HEK293 (cell line): ENCODE measurements at regions of chr6 and their contacts with region 1.

Region 1: GRCh38 chr6:99393698-99394531 is at the start of gene COQ3:
- H3K4me3 ChIP-seq: peak within 1 kb of the TSS; percentile 71
- H3K27ac ChIP-seq: peak within 1 kb of the TSS; percentile 64
- H3K4me1 ChIP-seq: no peaks in the 10 kb centered on the region
- CTCF ChIP-seq: no peak

Region 2: GRCh38 chr6:99344289-99344688 is 49.6 kb before region 1 on chr6:
- CTCF ChIA-PET with region 1: interaction called, 5 read pairs
- POLR2A ChIA-PET with region 1: interaction called, 41 read pairs
- H3K4me3 ChIP-seq: no peak overlapping the region
- H3K27ac ChIP-seq: no peak overlapping the region
- H3K4me1 ChIP-seq: no peaks in the 10 kb centered on the region
- CTCF ChIP-seq: no peak

Region 3: GRCh38 chr6:99349171-99350141 is 44.5 kb before region 1 on chr6 and contains the start of gene FAXC:
- CTCF ChIA-PET with region 1: interaction called, 5 read pairs
- POLR2A ChIA-PET with region 1: interaction called, 41 read pairs
- H3K4me3 ChIP-seq: peak within 1 kb of the TSS; percentile 62
- H3K27ac ChIP-seq: peak within 1 kb of the TSS; percentile 83; the same call in 1 of the 2 replicates
- H3K4me1 ChIP-seq: peaks cover 5% of the 10 kb centered on the region; the same call in 1 of the 2 replicates
- CTCF ChIP-seq: peak; percentile 68

Region 4: DNA sequence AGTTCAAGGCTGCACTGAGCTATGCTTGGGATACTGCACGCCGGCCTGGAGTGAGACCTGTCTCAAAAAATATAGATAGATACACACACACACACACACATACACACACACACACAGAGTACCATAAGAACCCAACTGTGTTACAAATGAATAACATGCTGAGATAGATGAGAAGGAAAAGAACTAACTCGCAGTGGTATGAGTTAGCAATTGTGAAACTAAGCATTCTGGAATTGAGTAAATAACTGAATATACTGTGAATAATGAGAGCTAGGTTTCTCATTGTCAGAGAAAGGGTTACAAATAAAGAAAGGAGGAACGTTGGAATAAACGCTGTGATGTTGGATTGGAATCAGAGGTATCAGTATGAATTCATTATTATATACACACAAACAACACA is 29.9 kb before region 1 on chr6:
- CTCF ChIA-PET with region 1: no interaction called
- POLR2A ChIA-PET with region 1: interaction called, 14 read pairs
- H3K4me3 ChIP-seq: no peak overlapping the region
- H3K27ac ChIP-seq: no peak overlapping the region
- H3K4me1 ChIP-seq: no peaks in the 10 kb centered on the region
- CTCF ChIP-seq: no peak

Region 5: GRCh38 chr6:99369533-99369932 is 24.4 kb before region 1 on chr6:
- CTCF ChIA-PET with region 1: interaction called, 4 read pairs
- POLR2A ChIA-PET with region 1: interaction called, 11 read pairs
- H3K4me3 ChIP-seq: no peak overlapping the region
- H3K27ac ChIP-seq: no peak overlapping the region
- H3K4me1 ChIP-seq: no peaks in the 10 kb centered on the region
- CTCF ChIP-seq: no peak

Region 6: GRCh38 chr6:99378636-99379035 is 15.3 kb before region 1 on chr6:
- CTCF ChIA-PET with region 1: interaction called, 4 read pairs
- POLR2A ChIA-PET with region 1: interaction called, 10 read pairs
- H3K4me3 ChIP-seq: no peak overlapping the region
- H3K27ac ChIP-seq: no peak overlapping the region
- H3K4me1 ChIP-seq: no peaks in the 10 kb centered on the region
- CTCF ChIP-seq: no peak

Region 7: GRCh38 chr6:99425647-99426453 is 31.9 kb after region 1 on chr6:
- CTCF ChIA-PET with region 1: interaction called, 11 read pairs
- POLR2A ChIA-PET with region 1: interaction called, 31 read pairs
- H3K4me3 ChIP-seq: peak overlapping the region; percentile 57
- H3K27ac ChIP-seq: peak overlapping the region; percentile 88
- H3K4me1 ChIP-seq: peaks cover 4% of the 10 kb centered on the region; the same call in 1 of the 2 replicates
- CTCF ChIP-seq: peak; percentile 72